ENCODE measurements at regions of chr12 and their contacts with region 1.

Region 1: GRCh38 chr12:949453-950191 is at the start of gene RAD52:
- DNase-seq: peak; percentile 99
- H3K4me3 Mint-ChIP-seq: peak within 1 kb of the TSS; percentile 97
- H3K27ac Mint-ChIP-seq: peak within 1 kb of the TSS; percentile 96
- H3K4me1 Mint-ChIP-seq: peaks cover 25% of the 10 kb centered on the region
- H3K27me3 Mint-ChIP-seq: peaks cover 5% of the 10 kb centered on the region
- total RNA-seq, gene RAD52: 15.2 and 15.7 TPM in 2 replicates

Region 2: DNA sequence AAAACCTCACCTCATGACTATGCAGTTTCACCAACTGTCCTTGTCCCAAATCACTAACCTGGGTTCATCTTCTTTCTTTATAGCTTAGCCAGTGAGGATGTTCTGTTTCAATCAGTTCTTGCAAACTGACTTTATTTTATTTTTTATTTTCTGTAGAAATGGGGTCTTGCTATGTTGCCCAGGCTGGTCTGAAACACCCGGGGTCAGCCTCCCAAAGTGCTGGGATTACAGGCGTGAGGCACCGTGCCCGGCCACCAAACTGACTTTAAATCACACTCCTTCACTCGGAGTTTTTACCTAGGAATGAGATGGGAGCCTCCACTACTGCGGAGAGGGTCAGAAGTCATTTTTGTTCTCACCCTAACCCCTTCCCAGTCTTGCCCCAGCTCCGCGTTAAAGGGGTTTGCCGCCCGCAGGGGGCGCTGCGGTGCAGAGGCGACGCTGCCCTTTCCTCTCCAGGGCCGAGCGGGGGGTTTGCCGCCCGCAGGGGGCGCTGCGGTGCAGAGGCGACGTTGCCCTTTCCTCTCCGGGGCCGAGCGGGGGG is 496.9 kb before region 1 on chr12:
- intact Hi-C with region 1: loop called (anchors 5 kb)
- DNase-seq: peak; percentile 94
- H3K4me3 Mint-ChIP-seq: no peak overlapping the region
- H3K27ac Mint-ChIP-seq: no peak overlapping the region
- H3K4me1 Mint-ChIP-seq: peaks cover 6% of the 10 kb centered on the region
- H3K27me3 Mint-ChIP-seq: peaks cover 38% of the 10 kb centered on the region

Region 3: DNA sequence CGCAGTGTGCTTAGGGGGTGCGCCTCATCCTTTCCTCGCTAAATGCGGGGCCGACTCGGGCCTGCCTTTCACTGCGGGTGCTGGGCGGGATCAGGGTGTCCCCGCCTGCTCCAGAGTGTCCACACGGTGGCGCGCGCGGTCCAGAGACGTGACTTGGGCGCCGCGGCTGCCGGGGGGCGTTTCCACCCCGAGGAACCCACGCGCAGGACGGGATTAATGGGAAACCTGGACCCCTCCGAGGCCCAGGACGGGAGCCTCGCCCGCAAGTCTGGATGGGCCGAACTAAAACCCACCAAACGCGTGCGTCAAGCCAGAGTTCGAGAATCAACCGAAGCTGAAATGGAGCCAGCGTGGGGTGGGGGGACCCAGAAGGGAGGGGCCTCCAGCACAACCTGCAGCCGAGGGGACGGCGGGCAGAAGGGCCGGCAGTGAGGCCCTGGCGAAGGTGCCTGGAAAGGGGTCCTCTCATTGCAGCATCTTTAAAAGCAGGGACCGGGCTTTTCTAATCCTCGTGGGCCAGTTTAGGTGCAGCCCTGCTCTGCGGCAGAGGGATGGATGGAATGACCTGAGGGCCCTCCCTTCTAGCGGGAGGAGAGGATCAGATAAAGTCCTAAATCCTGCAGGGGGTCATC is 379.7 kb before region 1 on chr12:
- intact Hi-C with region 1: loop called (anchors 2 kb)
- DNase-seq: peak; percentile 96
- H3K4me3 Mint-ChIP-seq: peak overlapping the region; percentile 86
- H3K27ac Mint-ChIP-seq: peak overlapping the region; percentile 88
- H3K4me1 Mint-ChIP-seq: peaks cover 48% of the 10 kb centered on the region
- H3K27me3 Mint-ChIP-seq: no peaks in the 10 kb centered on the region

Region 4: GRCh38 chr12:674272-674781 is 275.3 kb before region 1 on chr12:
- intact Hi-C with region 1: loop called (anchors 5 kb)
- DNase-seq: peak; percentile 92
- H3K4me3 Mint-ChIP-seq: peak overlapping the region; percentile 73
- H3K27ac Mint-ChIP-seq: peak overlapping the region; percentile 96
- H3K4me1 Mint-ChIP-seq: peaks cover 65% of the 10 kb centered on the region
- H3K27me3 Mint-ChIP-seq: no peaks in the 10 kb centered on the region

Region 5: DNA sequence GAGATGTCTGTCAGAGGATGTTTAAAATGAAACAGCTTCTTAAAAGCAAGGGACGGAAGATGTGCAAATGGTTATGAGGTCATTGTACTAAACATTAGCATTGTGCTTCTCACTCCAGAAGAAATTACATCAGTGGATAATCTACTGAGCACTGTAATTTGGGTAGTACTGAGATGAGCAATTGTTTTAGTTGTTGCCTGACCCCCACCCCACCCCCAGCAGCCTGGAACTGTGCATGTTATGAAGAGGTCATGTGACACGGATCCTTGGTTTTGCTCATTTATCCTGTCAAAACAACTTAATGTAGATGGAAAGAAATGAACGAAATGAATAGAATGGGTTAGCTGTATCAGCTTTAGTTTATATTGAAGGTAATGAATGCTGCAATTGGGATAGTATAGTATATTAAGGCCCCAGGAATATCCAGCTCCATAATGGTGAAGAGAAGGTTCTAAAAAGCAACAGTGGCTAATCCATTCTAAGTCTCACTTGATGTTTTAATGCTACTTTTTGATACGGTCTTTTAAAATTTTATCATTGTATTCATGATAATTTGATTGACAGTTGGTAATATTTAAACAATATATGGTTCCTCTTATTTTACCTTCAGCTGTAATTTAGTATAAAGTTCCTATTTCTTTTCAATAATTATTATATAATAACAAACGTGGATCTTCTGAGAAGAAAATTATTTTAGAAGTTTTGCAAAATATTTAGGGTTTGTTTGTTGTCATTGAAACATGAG is 138.8 kb before region 1 on chr12:
- intact Hi-C with region 1: loop called (anchors 1 kb)
- DNase-seq: peak; percentile 74
- H3K4me3 Mint-ChIP-seq: no peak overlapping the region
- H3K27ac Mint-ChIP-seq: peak overlapping the region; percentile 57
- H3K4me1 Mint-ChIP-seq: peaks cover 41% of the 10 kb centered on the region
- H3K27me3 Mint-ChIP-seq: no peaks in the 10 kb centered on the region

Region 6: DNA sequence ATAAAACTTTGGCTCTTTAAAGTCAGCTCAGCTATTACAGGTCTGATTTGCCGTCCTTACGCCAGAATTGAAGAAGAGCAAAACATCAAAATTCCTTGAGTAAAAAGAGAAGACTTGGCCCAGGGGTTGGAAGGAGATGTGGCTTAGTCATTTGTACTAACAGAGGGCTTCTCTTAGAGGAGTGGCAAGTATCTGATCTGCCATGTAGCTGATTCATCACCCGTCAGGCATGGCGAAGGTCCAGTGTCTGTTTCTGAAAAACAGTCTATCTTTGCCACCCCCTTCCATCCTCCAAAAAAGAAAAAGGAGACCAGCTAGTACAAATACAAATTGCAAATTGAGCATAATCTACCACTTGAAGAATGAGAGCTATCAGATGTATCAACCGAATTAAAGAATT is 92.0 kb before region 1 on chr12:
- intact Hi-C with region 1: no loop called
- DNase-seq: no peak
- H3K4me3 Mint-ChIP-seq: no peak overlapping the region
- H3K27ac Mint-ChIP-seq: no peak overlapping the region
- H3K4me1 Mint-ChIP-seq: peaks cover 8% of the 10 kb centered on the region
- H3K27me3 Mint-ChIP-seq: no peaks in the 10 kb centered on the region

Region 7: GRCh38 chr12:905261-906031 is 44.2 kb before region 1 on chr12:
- intact Hi-C with region 1: loop called (anchors 1 kb)
- DNase-seq: peak; percentile 70
- H3K4me3 Mint-ChIP-seq: peak overlapping the region; percentile 1
- H3K27ac Mint-ChIP-seq: peak overlapping the region; percentile 68
- H3K4me1 Mint-ChIP-seq: peaks cover 27% of the 10 kb centered on the region
- H3K27me3 Mint-ChIP-seq: no peaks in the 10 kb centered on the region

Region 8: GRCh38 chr12:998020-998874 is 48.6 kb after region 1 on chr12:
- intact Hi-C with region 1: no loop called
- DNase-seq: no peak
- H3K4me3 Mint-ChIP-seq: no peak overlapping the region
- H3K27ac Mint-ChIP-seq: no peak overlapping the region
- H3K4me1 Mint-ChIP-seq: peaks cover 12% of the 10 kb centered on the region
- H3K27me3 Mint-ChIP-seq: no peaks in the 10 kb centered on the region

Region 9: GRCh38 chr12:1099158-1099557 is 149.5 kb after region 1 on chr12:
- intact Hi-C with region 1: loop called (anchors 5 kb)
- DNase-seq: peak; percentile 54
- H3K4me3 Mint-ChIP-seq: no peak overlapping the region
- H3K27ac Mint-ChIP-seq: no peak overlapping the region
- H3K4me1 Mint-ChIP-seq: peaks cover 29% of the 10 kb centered on the region
- H3K27me3 Mint-ChIP-seq: no peaks in the 10 kb centered on the region